ENCODE measurements at regions of chr2 and their contacts with region 1.

Region 1: GRCh38 chr2:48860380-48860779 is 104.9 kb upstream of the LHCGR start:
- DNase-seq: no peak
- ATAC-seq: no peak
- H3K4me3 ChIP-seq: no peak overlapping the region
- H3K27ac ChIP-seq: no peak overlapping the region
- H3K4me1 ChIP-seq: no peaks in the 10 kb centered on the region
- H3K27me3 ChIP-seq: peaks cover 0 to 7% (median 0%) of the 10 kb centered on the region in 7 donors
- CTCF ChIP-seq: no peak

Region 2: DNA sequence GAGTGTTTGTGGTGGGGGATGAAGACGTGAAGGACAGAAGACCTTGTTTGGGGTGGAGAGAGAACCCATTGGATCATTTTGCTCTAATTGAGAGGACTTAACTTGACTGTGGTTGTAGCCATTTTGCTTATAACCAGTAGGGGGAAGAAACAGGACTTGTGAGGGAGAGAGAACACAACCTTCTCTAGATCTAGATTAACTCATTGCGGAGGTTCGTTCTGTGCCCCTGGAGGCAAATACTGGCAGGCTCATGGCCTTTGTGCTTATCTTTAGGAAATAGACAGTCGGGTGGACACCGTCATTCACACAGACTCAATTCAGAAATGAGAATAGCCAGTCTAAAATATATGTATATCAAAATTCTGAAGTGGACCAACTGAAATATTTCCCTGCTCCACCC is 42.2 kb after region 1 on chr2:
- intact Hi-C with region 1: loop called in 1 of 10 experiments (anchors 1 kb)
- DNase-seq: no peak
- ATAC-seq: no peak
- H3K4me3 ChIP-seq: no peak overlapping the region
- H3K27ac ChIP-seq: no peak overlapping the region
- H3K4me1 ChIP-seq: peaks cover 0 to 12% (median 0%) of the 10 kb centered on the region in 9 donors
- H3K27me3 ChIP-seq: peaks cover 0 to 14% (median 0%) of the 10 kb centered on the region in 7 donors
- CTCF ChIP-seq: no peak